HCT116 (cell line): ENCODE measurements at regions of chr1 and their contacts with region 1.

Region 1: DNA sequence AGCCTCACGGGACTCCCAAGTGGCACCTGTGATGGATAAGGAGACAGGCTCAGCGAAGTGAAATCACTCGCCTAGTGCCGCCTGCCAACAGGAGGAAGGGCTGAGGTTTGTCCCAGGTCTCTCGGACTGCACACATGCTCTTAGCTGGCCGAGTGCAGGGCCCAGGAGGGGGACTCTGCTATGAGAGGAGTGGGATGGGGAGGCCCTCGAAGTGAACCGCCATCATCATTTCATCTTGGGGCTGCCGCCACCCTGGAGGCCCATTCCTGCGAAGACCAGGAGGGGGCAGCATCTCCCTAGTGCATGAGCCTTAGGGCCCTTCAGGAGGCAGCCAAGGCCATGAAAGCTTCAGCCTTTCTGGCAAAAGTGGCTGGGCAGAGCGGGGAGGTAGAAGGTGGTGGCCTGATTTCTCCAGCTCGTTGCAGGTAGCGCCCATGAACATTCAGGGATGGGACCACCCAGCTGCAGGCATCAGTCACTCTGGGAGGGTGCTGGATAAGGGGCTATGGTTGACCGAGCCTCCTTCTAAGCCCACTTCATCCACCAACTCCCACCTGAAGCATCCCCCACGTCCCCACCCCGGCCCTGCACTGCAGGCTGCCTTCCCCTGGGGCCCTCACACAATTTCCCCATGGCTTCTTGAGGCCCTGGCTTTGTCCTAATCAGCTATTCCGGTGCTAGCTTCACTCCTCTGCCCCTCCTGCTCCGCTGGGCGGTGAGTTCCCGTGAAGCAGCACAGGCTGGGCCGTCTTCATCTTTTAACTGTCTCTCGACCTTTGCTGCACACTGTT is 17.2 kb upstream of the RASSF5 start:
- DNase-seq: no peak
- ATAC-seq: peak; percentile 96
- H3K4me3 ChIP-seq: no peak overlapping the region
- H3K27ac ChIP-seq: no peak overlapping the region
- H3K4me1 ChIP-seq: no peaks in the 10 kb centered on the region
- H3K27me3 ChIP-seq: no peaks in the 10 kb centered on the region
- CTCF ChIP-seq: peak; percentile 94 to 98 (median 94)
- POLR2A ChIP-seq: no peak
- RAD21 ChIP-seq: peak; percentile 99

Region 2: GRCh38 chr1:206544562-206545257 is 54.5 kb after region 1 on chr1:
- CTCF ChIA-PET with region 1: interaction called, 10 read pairs
- POLR2A ChIA-PET with region 1: no interaction called
- RAD21 ChIA-PET with region 1: no interaction called
- intact Hi-C with region 1: loop called (anchors 2 kb)
- DNase-seq: peak; percentile 37
- ATAC-seq: peak; percentile 98
- H3K4me3 ChIP-seq: no peak overlapping the region
- H3K27ac ChIP-seq: no peak overlapping the region
- H3K4me1 ChIP-seq: peaks cover 0 to 7% of the 10 kb centered on the region in 2 experiments; a peak in 2 of 4 replicates
- H3K27me3 ChIP-seq: no peaks in the 10 kb centered on the region
- CTCF ChIP-seq: peak; percentile 72 to 89 (median 86)
- POLR2A ChIP-seq: no peak
- RAD21 ChIP-seq: peak; percentile 71

Region 3: GRCh38 chr1:206591226-206591625 is 101.1 kb after region 1 on chr1:
- CTCF ChIA-PET with region 1: interaction called, 96 read pairs
- POLR2A ChIA-PET with region 1: no interaction called
- RAD21 ChIA-PET with region 1: no interaction called
- intact Hi-C with region 1: no loop called
- DNase-seq: no peak
- ATAC-seq: no peak
- H3K4me3 ChIP-seq: no peak overlapping the region
- H3K27ac ChIP-seq: no peak overlapping the region
- H3K4me1 ChIP-seq: peaks cover 4 to 20% of the 10 kb centered on the region in 2 experiments; a peak in 3 of 4 replicates
- H3K27me3 ChIP-seq: no peaks in the 10 kb centered on the region
- CTCF ChIP-seq: no peak
- POLR2A ChIP-seq: no peak
- RAD21 ChIP-seq: no peak